Brain microvascular endothelial cell (primary cell): ENCODE measurements at regions of chr15 and their contacts with region 1.

Region 1: GRCh38 chr15:33132722-33133345 is 61.7 kb downstream of the FMN1 start:
- DNase-seq: peak; percentile 70
- H3K4me3 ChIP-seq: no peak overlapping the region
- H3K27ac ChIP-seq: peak overlapping the region; percentile 65
- H3K27me3 ChIP-seq: no peaks in the 10 kb centered on the region
- CTCF ChIP-seq: peak; percentile 84

Region 2: GRCh38 chr15:32651229-32651837 is 481.5 kb before region 1 on chr15:
- in situ Hi-C with region 1: loop called (anchors 25 kb)
- DNase-seq: peak; percentile 56
- H3K4me3 ChIP-seq: no peak overlapping the region
- H3K27ac ChIP-seq: no peak overlapping the region
- H3K27me3 ChIP-seq: no peaks in the 10 kb centered on the region
- CTCF ChIP-seq: peak; percentile 98

Region 3: GRCh38 chr15:33021806-33022389 is 110.9 kb before region 1 on chr15:
- in situ Hi-C with region 1: loop called (anchors 25 kb)
- DNase-seq: peak; percentile 57
- H3K4me3 ChIP-seq: no peak overlapping the region
- H3K27ac ChIP-seq: peak overlapping the region; percentile 60
- H3K27me3 ChIP-seq: no peaks in the 10 kb centered on the region
- CTCF ChIP-seq: peak; percentile 66